ENCODE measurements at regions of chr17 and their contacts with region 1.

Region 1: GRCh38 chr17:2336215-2336851 is at the start of gene TSR1:
- DNase-seq: peak; percentile 86
- H3K4me3 Mint-ChIP-seq: no peak within 1 kb of the TSS
- H3K27ac Mint-ChIP-seq: peak within 1 kb of the TSS; percentile 94
- H3K4me1 Mint-ChIP-seq: peaks cover 5% of the 10 kb centered on the region
- H3K27me3 Mint-ChIP-seq: no peaks in the 10 kb centered on the region
- total RNA-seq, gene TSR1: 91.3 and 92.9 TPM in 2 replicates

Region 2: GRCh38 chr17:1684378-1685189 is 651.7 kb before region 1 on chr17 and contains the start of gene PRPF8:
- intact Hi-C with region 1: loop called (anchors 1 kb)
- DNase-seq: peak; percentile 98
- H3K4me3 Mint-ChIP-seq: peak within 1 kb of the TSS; percentile 97
- H3K27ac Mint-ChIP-seq: peak within 1 kb of the TSS; percentile 93
- H3K4me1 Mint-ChIP-seq: peaks cover 36% of the 10 kb centered on the region
- H3K27me3 Mint-ChIP-seq: no peaks in the 10 kb centered on the region
- total RNA-seq, gene PRPF8: 405 and 410 TPM in 2 replicates

Region 3: GRCh38 chr17:2303204-2304188 is 32.8 kb before region 1 on chr17 and contains the starts of genes SMG6 and SRR:
- intact Hi-C with region 1: loop called (anchors 1 kb)
- DNase-seq: peak; percentile 88
- H3K4me3 Mint-ChIP-seq: peak within 1 kb of the TSS; percentile 92
- H3K27ac Mint-ChIP-seq: peak within 1 kb of the TSS; percentile 85
- H3K4me1 Mint-ChIP-seq: peaks cover 46% of the 10 kb centered on the region
- H3K27me3 Mint-ChIP-seq: no peaks in the 10 kb centered on the region
- total RNA-seq, gene SMG6: 35.3 and 39.5 TPM in 2 replicates
- total RNA-seq, gene SRR: 14.9 and 17.4 TPM in 2 replicates

Region 4: DNA sequence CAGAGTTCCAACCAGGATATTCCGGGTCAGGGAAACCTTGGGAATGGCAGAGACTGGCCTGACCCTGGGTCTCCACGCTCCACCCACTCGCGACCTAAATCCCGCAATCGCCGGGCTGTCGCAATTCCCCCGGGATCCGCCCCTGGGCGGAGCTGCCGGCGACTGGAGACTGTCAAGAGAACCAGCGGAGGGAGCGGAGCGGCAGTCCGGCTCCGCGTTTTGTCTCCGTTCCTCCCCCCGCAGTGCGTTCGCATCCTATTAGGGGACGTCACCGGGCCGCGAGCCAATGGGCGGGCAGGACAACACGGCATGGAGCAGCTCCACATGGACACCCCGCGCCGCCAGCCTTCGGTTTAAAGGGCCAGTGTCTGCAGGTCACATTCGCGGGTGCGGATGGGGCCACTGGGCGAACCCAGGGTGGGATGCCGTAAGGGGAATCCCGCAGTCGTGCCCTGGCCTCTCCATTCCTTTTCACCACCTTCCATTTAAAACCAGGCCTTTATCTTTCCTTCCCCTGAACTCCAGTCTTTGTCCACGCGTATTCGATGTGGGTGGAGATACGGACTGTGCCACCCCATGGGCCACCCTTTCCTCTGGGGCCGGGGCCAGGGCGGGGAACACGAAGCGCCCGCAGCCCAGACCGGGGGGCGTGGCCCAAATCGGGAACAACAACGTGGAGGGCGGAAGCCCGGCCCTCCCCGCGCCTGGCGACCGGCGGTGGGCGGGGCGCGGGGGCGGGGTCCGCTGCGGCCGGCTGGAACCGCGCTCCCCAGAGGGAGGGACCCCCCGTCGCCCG is 65.3 kb after region 1 on chr17:
- intact Hi-C with region 1: loop called (anchors 1 kb)
- DNase-seq: peak; percentile 100
- H3K4me3 Mint-ChIP-seq: peak overlapping the region; percentile 93
- H3K27ac Mint-ChIP-seq: peak overlapping the region; percentile 98
- H3K4me1 Mint-ChIP-seq: peaks cover 54% of the 10 kb centered on the region
- H3K27me3 Mint-ChIP-seq: no peaks in the 10 kb centered on the region

Region 5: GRCh38 chr17:2511462-2512369 is 175.4 kb after region 1 on chr17 and contains the start of gene METTL16:
- intact Hi-C with region 1: loop called (anchors 2 kb)
- DNase-seq: peak; percentile 95
- H3K4me3 Mint-ChIP-seq: no peak within 1 kb of the TSS
- H3K27ac Mint-ChIP-seq: peak within 1 kb of the TSS; percentile 9
- H3K4me1 Mint-ChIP-seq: peaks cover 11% of the 10 kb centered on the region
- H3K27me3 Mint-ChIP-seq: peaks cover 3% of the 10 kb centered on the region
- total RNA-seq, gene METTL16: 53.9 and 57.9 TPM in 2 replicates